Adrenal gland (tissue), 19 donors: ENCODE measurements at regions of chr9 and their contacts with region 1.

Region 1: GRCh38 chr9:36407122-36407723 is 7.2 kb upstream of the RNF38 start:
- DNase-seq: peak; percentile 29 to 82 (median 58)
- H3K4me3 ChIP-seq: no peak overlapping the region
- H3K27ac ChIP-seq: peak overlapping the region in 1 of 5 donors; percentile 36
- H3K4me1 ChIP-seq: no peaks in the 10 kb centered on the region
- H3K27me3 ChIP-seq: no peaks in the 10 kb centered on the region
- CTCF ChIP-seq: peak; percentile 87 to 97 (median 94)
- POLR2A ChIP-seq: no peak

Region 2: DNA sequence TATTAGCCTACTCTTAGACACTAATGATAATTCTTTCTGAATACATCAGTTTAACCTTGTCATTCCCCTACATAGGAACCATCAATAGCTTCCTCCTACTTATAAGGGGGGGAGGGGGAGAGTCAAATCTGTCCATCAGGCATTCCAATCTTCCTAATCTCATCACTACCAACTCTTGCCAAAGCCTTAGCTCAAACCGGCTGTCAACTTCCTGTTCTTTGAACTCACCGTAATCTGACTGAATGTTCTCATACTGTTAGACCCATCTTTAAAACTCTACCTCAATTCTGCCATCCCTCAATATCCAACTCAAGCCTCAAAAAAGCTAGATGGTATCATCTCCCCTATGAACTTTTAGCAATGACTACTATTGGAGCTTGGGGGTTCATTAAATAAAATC is 34.7 kb after region 1 on chr9:
- intact Hi-C with region 1: loop called (anchors 5 kb)
- DNase-seq: no peak
- H3K4me3 ChIP-seq: no peak overlapping the region
- H3K27ac ChIP-seq: no peak overlapping the region
- H3K4me1 ChIP-seq: peaks cover 0 to 12% of the 10 kb centered on the region in 2 donors
- H3K27me3 ChIP-seq: no peaks in the 10 kb centered on the region
- CTCF ChIP-seq: no peak
- POLR2A ChIP-seq: no peak

Region 3: GRCh38 chr9:36532353-36532752 is 125.1 kb after region 1 on chr9:
- intact Hi-C with region 1: no loop called
- DNase-seq: no peak
- H3K4me3 ChIP-seq: no peak overlapping the region
- H3K27ac ChIP-seq: no peak overlapping the region
- H3K4me1 ChIP-seq: no peaks in the 10 kb centered on the region
- H3K27me3 ChIP-seq: no peaks in the 10 kb centered on the region
- CTCF ChIP-seq: no peak
- POLR2A ChIP-seq: no peak

Region 4: GRCh38 chr9:36560857-36561221 is 153.6 kb after region 1 on chr9:
- intact Hi-C with region 1: loop called (anchors 2 to 5 kb)
- DNase-seq: no peak
- H3K4me3 ChIP-seq: no peak overlapping the region
- H3K27ac ChIP-seq: no peak overlapping the region
- H3K4me1 ChIP-seq: no peaks in the 10 kb centered on the region
- H3K27me3 ChIP-seq: no peaks in the 10 kb centered on the region
- CTCF ChIP-seq: no peak
- POLR2A ChIP-seq: no peak